CD8-positive, alpha-beta T cell (primary cell): ENCODE measurements at regions of chr19 and their contacts with region 1.

Region 1: GRCh38 chr19:45092747-45093678 is at the start of gene PPP1R37:
- DNase-seq: peak; percentile 76 to 97 (median 92)
- ATAC-seq: peak; percentile 76
- H3K4me3 ChIP-seq: peak within 1 kb of the TSS; percentile 64 to 88
- H3K4me3 Mint-ChIP-seq: peak within 1 kb of the TSS; percentile 93
- H3K27ac ChIP-seq: peak within 1 kb of the TSS; percentile 84 to 96
- H3K27ac Mint-ChIP-seq: peak within 1 kb of the TSS; percentile 97
- H3K4me1 ChIP-seq: peaks cover 51% of the 10 kb centered on the region
- H3K4me1 Mint-ChIP-seq: peaks cover 67% of the 10 kb centered on the region
- H3K27me3 ChIP-seq: no peaks in the 10 kb centered on the region
- H3K27me3 Mint-ChIP-seq: no peaks in the 10 kb centered on the region
- CTCF ChIP-seq: peak; percentile 43
- total RNA-seq, gene PPP1R37: 19.3 to 19.9 TPM

Region 2: DNA sequence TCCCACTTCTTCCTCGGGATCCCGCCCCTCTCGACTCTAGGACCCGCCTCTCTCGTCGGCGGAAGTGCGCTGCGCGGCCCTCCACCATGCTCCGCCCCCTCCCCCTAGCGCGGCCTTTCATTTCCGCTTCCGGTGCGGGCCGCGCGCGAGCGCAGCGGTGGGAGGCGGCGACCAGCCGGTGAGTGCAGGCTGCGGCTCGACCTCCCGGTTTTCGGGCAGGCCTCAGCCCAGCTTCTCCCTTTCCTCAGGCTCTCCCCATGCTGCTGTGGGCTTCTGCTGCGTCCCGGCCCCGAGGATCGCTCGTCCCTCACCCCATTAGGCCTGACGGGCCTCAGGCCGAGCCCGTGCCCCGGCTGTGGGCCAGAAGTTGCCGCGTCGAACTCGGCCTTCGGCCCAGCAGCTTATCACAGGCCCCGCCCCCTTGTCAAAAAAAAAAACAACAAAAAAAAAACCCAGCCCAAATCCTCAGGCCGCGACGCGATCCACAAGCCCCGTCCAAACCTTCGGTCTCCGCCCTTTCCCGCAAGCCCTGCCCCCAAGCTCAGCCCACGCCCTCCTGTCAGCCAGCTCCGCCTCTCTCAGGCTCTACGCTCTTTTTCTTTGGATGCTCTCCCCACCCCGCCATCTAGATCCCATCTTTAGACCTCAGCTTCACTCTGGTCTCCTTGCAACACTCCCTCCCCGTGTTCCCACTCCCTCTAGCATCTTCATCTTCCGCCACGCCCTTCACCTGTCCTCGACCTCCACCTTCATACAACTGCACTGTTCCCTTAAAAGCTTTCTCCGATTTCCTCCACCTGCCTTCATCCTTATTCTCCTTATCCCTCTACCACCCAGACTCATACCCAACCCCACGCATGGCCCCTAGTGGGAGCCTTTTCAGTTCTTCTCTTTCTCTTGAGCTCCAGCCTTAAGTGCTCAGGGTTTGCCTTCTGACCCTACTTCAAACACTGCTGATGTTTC is 53.8 kb before region 1 on chr19 and contains the start of gene CLASRP:
- CTCF ChIA-PET with region 1: interaction called, 3 read pairs
- POLR2A ChIA-PET with region 1: interaction called, 13 read pairs
- intact Hi-C with region 1: loop called (anchors 1 to 5 kb)
- DNase-seq: peak; percentile 73 to 94 (median 89)
- ATAC-seq: peak; percentile 89
- H3K4me3 ChIP-seq: peak within 1 kb of the TSS; percentile 86 to 89
- H3K4me3 Mint-ChIP-seq: peak within 1 kb of the TSS; percentile 93
- H3K27ac ChIP-seq: peak within 1 kb of the TSS; percentile 92 to 96
- H3K27ac Mint-ChIP-seq: peak within 1 kb of the TSS; percentile 90
- H3K4me1 ChIP-seq: peaks cover 23% of the 10 kb centered on the region
- H3K4me1 Mint-ChIP-seq: peaks cover 32% of the 10 kb centered on the region
- H3K27me3 ChIP-seq: no peaks in the 10 kb centered on the region
- H3K27me3 Mint-ChIP-seq: no peaks in the 10 kb centered on the region
- CTCF ChIP-seq: no peak
- total RNA-seq, gene CLASRP: 144 to 153 TPM

Region 3: DNA sequence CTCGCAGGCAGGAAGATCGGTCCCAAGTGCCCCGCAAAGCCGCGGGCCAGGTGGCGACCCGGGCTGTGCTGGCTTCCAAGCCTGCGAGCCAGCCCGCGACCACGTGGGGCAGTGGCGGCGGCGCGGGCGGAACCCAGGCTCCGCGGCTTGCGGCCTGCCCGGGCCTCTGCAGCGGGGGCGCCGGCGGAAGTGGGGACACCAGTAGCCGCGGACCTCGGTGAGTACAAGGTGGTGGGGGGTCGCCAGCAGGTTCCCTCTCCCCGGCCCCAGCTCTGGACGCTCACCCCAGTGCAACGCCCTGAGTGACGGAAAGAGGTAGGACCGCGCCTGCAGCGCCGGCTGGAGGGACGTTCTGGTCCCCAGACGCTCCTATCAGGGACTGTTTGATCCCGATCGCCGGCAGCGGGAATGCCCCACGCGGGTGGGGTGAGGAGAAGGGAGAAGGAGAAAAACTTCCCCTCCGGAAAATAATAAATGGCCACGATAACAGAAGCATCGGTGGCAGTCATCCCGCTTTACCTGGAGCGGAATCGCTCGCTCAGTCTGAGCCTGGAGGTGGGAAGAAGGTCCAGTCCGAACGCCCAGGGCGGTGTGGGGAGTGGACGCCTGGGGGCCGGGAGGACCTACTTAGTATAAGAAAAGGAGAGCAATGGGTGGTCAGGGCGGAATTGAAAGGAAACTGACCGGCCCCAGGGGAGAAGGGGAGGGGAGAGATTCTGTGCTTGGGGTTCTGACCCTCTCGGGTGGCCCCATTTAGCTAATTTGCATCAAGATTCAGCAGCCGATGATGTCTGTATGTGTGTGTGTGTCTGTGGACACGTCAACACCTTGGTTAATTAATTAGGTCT is 13.7 kb before region 1 on chr19 and contains the start of gene GEMIN7:
- CTCF ChIA-PET with region 1: interaction called, 6 read pairs
- POLR2A ChIA-PET with region 1: interaction called, 26 read pairs
- intact Hi-C with region 1: loop called (anchors 1 kb)
- DNase-seq: peak; percentile 64 to 89 (median 76)
- ATAC-seq: peak; percentile 70
- H3K4me3 ChIP-seq: peak within 1 kb of the TSS; percentile 95 to 98
- H3K4me3 Mint-ChIP-seq: peak within 1 kb of the TSS; percentile 90
- H3K27ac ChIP-seq: peak within 1 kb of the TSS; percentile 77 to 78
- H3K27ac Mint-ChIP-seq: peak within 1 kb of the TSS; percentile 81
- H3K4me1 ChIP-seq: peaks cover 46% of the 10 kb centered on the region
- H3K4me1 Mint-ChIP-seq: peaks cover 45% of the 10 kb centered on the region
- H3K27me3 ChIP-seq: no peaks in the 10 kb centered on the region
- H3K27me3 Mint-ChIP-seq: no peaks in the 10 kb centered on the region
- CTCF ChIP-seq: no peak
- total RNA-seq, gene GEMIN7: 7.2 to 7.7 TPM

Region 4: GRCh38 chr19:45103156-45103507 is 10.1 kb after region 1 on chr19:
- CTCF ChIA-PET with region 1: interaction called, 3 read pairs
- POLR2A ChIA-PET with region 1: interaction called, 11 read pairs
- intact Hi-C with region 1: no loop called
- DNase-seq: peak in 7 of 9 experiments; percentile 19 to 80 (median 60)
- ATAC-seq: peak; percentile 87
- H3K4me3 ChIP-seq: peak overlapping the region; percentile 20 to 49
- H3K4me3 Mint-ChIP-seq: peak overlapping the region; percentile 70
- H3K27ac ChIP-seq: peak overlapping the region; percentile 41 to 74
- H3K27ac Mint-ChIP-seq: peak overlapping the region; percentile 74
- H3K4me1 ChIP-seq: peaks cover 43% of the 10 kb centered on the region
- H3K4me1 Mint-ChIP-seq: peaks cover 72% of the 10 kb centered on the region
- H3K27me3 ChIP-seq: no peaks in the 10 kb centered on the region
- H3K27me3 Mint-ChIP-seq: no peaks in the 10 kb centered on the region
- CTCF ChIP-seq: no peak

Region 5: DNA sequence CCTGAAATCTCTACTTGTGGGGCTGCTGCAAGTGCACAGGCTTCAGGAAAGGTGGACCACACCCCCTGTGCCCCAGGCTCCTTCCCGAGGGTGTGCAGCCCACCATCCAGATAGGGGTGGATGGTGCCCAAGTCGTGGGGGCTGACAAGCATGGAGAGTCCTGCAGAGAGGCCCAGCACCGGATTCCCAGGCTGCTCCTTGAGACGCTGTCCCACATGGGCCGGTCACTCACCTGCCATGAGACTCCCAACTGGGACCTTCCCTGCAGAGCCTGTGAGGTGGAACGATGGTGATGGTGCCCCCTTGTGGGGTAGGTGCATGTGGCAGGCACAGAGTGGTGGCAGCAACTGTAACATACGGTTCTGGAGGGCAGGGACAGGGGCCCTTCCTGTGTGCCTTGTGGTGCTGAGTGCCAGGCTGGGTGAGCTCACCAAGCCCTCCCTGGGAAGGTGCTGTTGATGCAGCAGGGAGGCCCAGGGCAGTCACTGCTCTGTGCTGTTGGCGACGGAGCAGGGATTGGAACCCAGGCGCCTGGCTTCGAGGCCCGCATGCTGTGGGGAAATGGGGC is 33.0 kb after region 1 on chr19:
- CTCF ChIA-PET with region 1: interaction called, 4 read pairs
- POLR2A ChIA-PET with region 1: interaction called, 4 read pairs
- intact Hi-C with region 1: loop called in 1 of 2 experiments (anchors 2 kb)
- DNase-seq: peak; percentile 46 to 79 (median 68)
- ATAC-seq: peak; percentile 95
- H3K4me3 ChIP-seq: no peak overlapping the region
- H3K4me3 Mint-ChIP-seq: no peak overlapping the region
- H3K27ac ChIP-seq: no peak overlapping the region
- H3K27ac Mint-ChIP-seq: no peak overlapping the region
- H3K4me1 ChIP-seq: peaks cover 29% of the 10 kb centered on the region
- H3K4me1 Mint-ChIP-seq: peaks cover 27% of the 10 kb centered on the region
- H3K27me3 ChIP-seq: no peaks in the 10 kb centered on the region
- H3K27me3 Mint-ChIP-seq: no peaks in the 10 kb centered on the region
- CTCF ChIP-seq: peak; percentile 68

Region 6: GRCh38 chr19:45146741-45147205 is 53.8 kb after region 1 on chr19:
- CTCF ChIA-PET with region 1: no interaction called
- POLR2A ChIA-PET with region 1: no interaction called
- intact Hi-C with region 1: no loop called
- DNase-seq: no peak
- ATAC-seq: no peak
- H3K4me3 ChIP-seq: no peak overlapping the region
- H3K4me3 Mint-ChIP-seq: no peak overlapping the region
- H3K27ac ChIP-seq: no peak overlapping the region
- H3K27ac Mint-ChIP-seq: no peak overlapping the region
- H3K4me1 ChIP-seq: peaks cover 5% of the 10 kb centered on the region
- H3K4me1 Mint-ChIP-seq: peaks cover 8% of the 10 kb centered on the region
- H3K27me3 ChIP-seq: no peaks in the 10 kb centered on the region
- H3K27me3 Mint-ChIP-seq: no peaks in the 10 kb centered on the region
- CTCF ChIP-seq: no peak

Region 7: DNA sequence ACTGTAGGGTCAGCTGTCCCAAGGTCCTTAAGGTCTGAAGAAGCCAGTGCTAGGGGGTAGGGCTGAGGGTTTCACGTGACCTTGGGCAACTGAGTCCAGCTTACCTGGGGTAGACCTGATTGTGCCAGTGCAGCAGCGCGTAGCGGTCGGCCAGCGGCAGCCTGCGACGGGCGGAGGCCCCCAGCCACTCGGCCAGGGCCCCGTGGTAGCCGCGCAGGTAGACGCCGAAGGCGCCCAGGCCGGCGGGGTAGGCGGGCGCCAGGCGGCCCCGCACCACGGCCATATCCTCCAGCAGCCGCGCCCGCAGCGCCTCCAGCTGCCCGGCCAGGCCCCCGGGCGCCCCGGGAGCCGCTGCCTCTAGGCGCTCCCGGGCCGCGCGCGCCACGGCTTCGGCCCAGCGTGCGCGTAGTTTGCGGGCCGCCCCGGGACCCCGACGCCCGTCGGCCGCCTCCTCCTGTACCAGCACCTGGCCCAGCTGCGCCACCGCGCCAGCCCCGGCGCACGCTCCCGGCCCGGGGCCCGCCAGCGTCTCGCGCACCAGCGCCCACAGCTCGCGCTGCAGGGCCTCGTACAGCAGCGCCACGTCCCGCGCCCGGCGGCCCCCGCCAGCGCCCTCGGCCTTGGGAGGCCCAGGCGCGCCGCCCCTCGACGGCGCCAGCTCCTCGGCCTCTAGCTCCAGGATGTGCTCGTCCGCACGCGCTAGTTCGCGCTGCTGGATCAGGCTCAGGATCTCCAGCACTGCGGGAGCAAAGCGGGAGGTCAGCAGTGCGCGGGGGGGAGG is 141.3 kb after region 1 on chr19:
- CTCF ChIA-PET with region 1: no interaction called
- POLR2A ChIA-PET with region 1: no interaction called
- intact Hi-C with region 1: no loop called
- DNase-seq: no peak
- ATAC-seq: no peak
- H3K4me3 ChIP-seq: no peak overlapping the region
- H3K4me3 Mint-ChIP-seq: no peak overlapping the region
- H3K27ac ChIP-seq: no peak overlapping the region
- H3K27ac Mint-ChIP-seq: no peak overlapping the region
- H3K4me1 ChIP-seq: no peaks in the 10 kb centered on the region
- H3K4me1 Mint-ChIP-seq: peaks cover 3% of the 10 kb centered on the region
- H3K27me3 ChIP-seq: peaks cover 0 to 3% of the 10 kb centered on the region in 2 experiments
- H3K27me3 Mint-ChIP-seq: peaks cover 44% of the 10 kb centered on the region
- CTCF ChIP-seq: no peak

Region 8: GRCh38 chr19:45405435-45406225 is 312.6 kb after region 1 on chr19:
- CTCF ChIA-PET with region 1: no interaction called
- POLR2A ChIA-PET with region 1: no interaction called
- intact Hi-C with region 1: loop called (anchors 2 kb)
- DNase-seq: peak; percentile 69 to 89 (median 85)
- ATAC-seq: peak; percentile 63
- H3K4me3 ChIP-seq: peak overlapping the region; percentile 63 to 85
- H3K4me3 Mint-ChIP-seq: peak overlapping the region; percentile 97
- H3K27ac ChIP-seq: peak overlapping the region; percentile 68 to 92
- H3K27ac Mint-ChIP-seq: peak overlapping the region; percentile 95
- H3K4me1 ChIP-seq: peaks cover 25% of the 10 kb centered on the region
- H3K4me1 Mint-ChIP-seq: peaks cover 31% of the 10 kb centered on the region
- H3K27me3 ChIP-seq: peaks cover 16 to 26% of the 10 kb centered on the region in 2 experiments
- H3K27me3 Mint-ChIP-seq: peaks cover 26% of the 10 kb centered on the region
- CTCF ChIP-seq: no peak